ENCODE measurements at regions of chr12 and their contacts with region 1.

Region 1: DNA sequence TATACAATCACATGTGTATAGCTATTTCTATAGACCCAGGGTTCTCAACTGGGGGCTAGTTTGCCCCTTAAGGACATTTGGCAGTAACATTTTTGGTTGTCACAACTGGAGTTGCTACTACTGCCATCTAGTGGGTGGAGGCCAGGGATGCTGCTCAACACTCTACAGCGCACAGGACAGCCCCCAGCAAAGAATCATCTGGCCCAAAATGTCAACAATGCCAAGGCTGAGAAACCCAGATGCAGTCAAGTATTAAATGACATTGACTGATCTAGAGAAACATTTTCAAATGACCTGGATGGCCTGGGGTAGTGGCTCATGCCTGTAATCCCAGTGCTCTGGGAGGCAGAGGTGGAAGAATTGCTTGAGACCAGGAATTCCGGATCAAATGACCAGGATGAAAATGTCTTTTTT is 5.8 kb downstream of the WSB2 start:
- DNase-seq: no peak
- ATAC-seq: peak; percentile 93
- H3K4me3 ChIP-seq: no peak overlapping the region
- H3K27ac ChIP-seq: no peak overlapping the region
- H3K4me1 ChIP-seq: no peaks in the 10 kb centered on the region
- H3K27me3 ChIP-seq: no peaks in the 10 kb centered on the region
- CTCF ChIP-seq: peak; percentile 71 to 73 (median 71)
- EP300 ChIP-seq: no peak
- POLR2A ChIP-seq: no peak
- RAD21 ChIP-seq: peak; percentile 69

Region 2: GRCh38 chr12:118016424-118017264 is 38.5 kb before region 1 on chr12 and contains the start of gene RFC5:
- CTCF ChIA-PET with region 1: interaction called, 5 read pairs
- POLR2A ChIA-PET with region 1: no interaction called
- RAD21 ChIA-PET with region 1: interaction called, 4 read pairs
- SMC1A ChIA-PET with region 1: interaction called, 3 read pairs
- in situ Hi-C with region 1: no loop called
- intact Hi-C with region 1: loop called (anchors 1 kb)
- DNase-seq: peak; percentile 87
- ATAC-seq: peak; percentile 97
- H3K4me3 ChIP-seq: peak within 1 kb of the TSS; percentile 69
- H3K27ac ChIP-seq: peak within 1 kb of the TSS; percentile 82
- H3K4me1 ChIP-seq: 0 out of 2 replicates have a peak, but pooled peaks cover 3% of the 10 kb centered on the region
- H3K27me3 ChIP-seq: no peaks in the 10 kb centered on the region
- CTCF ChIP-seq: 0 out of 6 replicates have a peak, but pooled peaks of 1 of the 3 experiments have one; percentile 3
- EP300 ChIP-seq: no peak
- POLR2A ChIP-seq: peak; percentile 97
- RAD21 ChIP-seq: no peak
- polyA plus RNA-seq, gene RFC5: 47.3 to 73.3 TPM

Region 3: DNA sequence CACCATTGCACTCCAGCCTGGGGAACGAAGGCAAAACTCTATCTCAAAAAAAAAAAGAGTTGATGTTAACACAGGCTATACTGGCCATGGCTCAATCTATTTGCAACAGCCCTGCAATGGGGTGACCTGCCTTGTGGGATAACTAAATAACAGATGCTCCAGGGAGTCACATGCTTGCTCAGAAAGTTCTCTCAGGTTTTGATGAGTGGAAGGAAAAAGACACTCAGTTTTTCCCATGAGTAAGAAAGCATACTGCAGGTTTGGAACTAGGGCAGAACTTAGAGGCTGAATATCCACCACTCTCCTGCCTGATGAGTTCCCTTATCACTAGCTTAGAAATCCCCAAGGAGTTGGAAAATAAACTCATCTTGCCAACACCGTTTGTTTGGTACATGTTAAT is 11.1 kb before region 1 on chr12:
- CTCF ChIA-PET with region 1: interaction called, 36 read pairs
- POLR2A ChIA-PET with region 1: no interaction called
- RAD21 ChIA-PET with region 1: interaction called, 4 read pairs
- SMC1A ChIA-PET with region 1: interaction called, 6 read pairs
- in situ Hi-C with region 1: no loop called
- intact Hi-C with region 1: no loop called
- DNase-seq: no peak
- ATAC-seq: no peak
- H3K4me3 ChIP-seq: no peak overlapping the region
- H3K27ac ChIP-seq: no peak overlapping the region
- H3K4me1 ChIP-seq: peaks cover 4% of the 10 kb centered on the region
- H3K27me3 ChIP-seq: no peaks in the 10 kb centered on the region
- CTCF ChIP-seq: no peak
- EP300 ChIP-seq: no peak
- POLR2A ChIP-seq: no peak
- RAD21 ChIP-seq: no peak